A673 (cell line): ENCODE measurements at regions of chr1 and their contacts with region 1.

Region 1: DNA sequence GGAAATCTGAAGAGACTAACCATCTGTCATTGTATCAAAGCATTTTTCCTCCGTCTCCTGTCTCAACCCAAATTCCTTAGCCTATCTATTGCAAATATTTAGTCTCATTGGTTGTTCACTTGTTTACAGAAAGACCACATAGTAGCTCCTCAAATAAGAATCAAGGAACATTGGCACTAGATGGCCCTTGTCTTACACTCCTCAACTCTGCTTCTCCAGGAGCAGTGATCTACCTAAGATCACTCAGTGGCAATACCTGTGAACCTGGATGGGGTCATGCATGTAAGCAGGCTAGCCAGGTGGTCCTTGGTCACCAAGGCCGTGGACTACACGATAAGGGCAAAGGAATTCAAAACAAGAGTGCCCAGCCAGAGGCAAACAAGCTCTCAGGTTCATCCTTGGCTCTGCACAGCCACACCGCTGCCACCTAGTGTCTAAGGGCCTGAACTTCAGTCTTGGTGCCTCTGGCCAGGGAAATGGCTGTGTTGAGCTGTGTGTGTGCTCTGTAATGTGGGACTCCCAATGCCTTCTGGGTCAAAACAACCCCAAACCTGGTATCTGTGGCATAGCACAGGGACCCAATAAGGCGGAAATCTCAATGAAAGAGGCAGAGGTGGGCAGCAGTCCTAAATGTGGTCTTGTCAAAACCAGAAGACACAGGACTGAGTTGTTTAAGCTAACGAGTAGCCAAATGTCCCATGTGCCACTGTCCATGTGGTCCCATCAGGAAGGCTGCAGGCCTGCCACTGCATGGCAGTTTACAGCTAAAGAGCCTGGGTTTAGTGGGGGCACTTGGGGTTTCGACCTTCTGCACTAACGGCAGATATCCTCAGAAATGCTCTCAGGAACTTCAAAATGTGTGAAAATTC is 54.5 kb downstream of the GPR161 start:
- DNase-seq: peak; percentile 79
- H3K4me3 ChIP-seq: no peak overlapping the region
- H3K27ac ChIP-seq: no peak overlapping the region
- H3K4me1 ChIP-seq: no peaks in the 10 kb centered on the region
- H3K27me3 ChIP-seq: no peaks in the 10 kb centered on the region
- CTCF ChIP-seq: peak; percentile 93

Region 2: GRCh38 chr1:167721617-167722151 is 360.6 kb before region 1 on chr1 and contains the start of gene MPZL1:
- CTCF ChIA-PET with region 1: interaction called, 12 read pairs
- POLR2A ChIA-PET with region 1: no interaction called
- intact Hi-C with region 1: loop called (anchors 2 kb)
- DNase-seq: peak; percentile 95
- H3K4me3 ChIP-seq: peak within 1 kb of the TSS; percentile 97
- H3K27ac ChIP-seq: peak within 1 kb of the TSS; percentile 80
- H3K4me1 ChIP-seq: peaks cover 13% of the 10 kb centered on the region
- H3K27me3 ChIP-seq: no peaks in the 10 kb centered on the region
- CTCF ChIP-seq: no peak
- total RNA-seq, gene MPZL1: 87.8 and 90.4 TPM in 2 replicates

Region 3: GRCh38 chr1:167803358-167804207 is 278.7 kb before region 1 on chr1:
- CTCF ChIA-PET with region 1: interaction called, 12 read pairs
- POLR2A ChIA-PET with region 1: no interaction called
- intact Hi-C with region 1: loop called (anchors 10 kb)
- DNase-seq: peak; percentile 96
- H3K4me3 ChIP-seq: no peak overlapping the region
- H3K27ac ChIP-seq: no peak overlapping the region
- H3K4me1 ChIP-seq: no peaks in the 10 kb centered on the region
- H3K27me3 ChIP-seq: no peaks in the 10 kb centered on the region
- CTCF ChIP-seq: peak; percentile 99

Region 4: DNA sequence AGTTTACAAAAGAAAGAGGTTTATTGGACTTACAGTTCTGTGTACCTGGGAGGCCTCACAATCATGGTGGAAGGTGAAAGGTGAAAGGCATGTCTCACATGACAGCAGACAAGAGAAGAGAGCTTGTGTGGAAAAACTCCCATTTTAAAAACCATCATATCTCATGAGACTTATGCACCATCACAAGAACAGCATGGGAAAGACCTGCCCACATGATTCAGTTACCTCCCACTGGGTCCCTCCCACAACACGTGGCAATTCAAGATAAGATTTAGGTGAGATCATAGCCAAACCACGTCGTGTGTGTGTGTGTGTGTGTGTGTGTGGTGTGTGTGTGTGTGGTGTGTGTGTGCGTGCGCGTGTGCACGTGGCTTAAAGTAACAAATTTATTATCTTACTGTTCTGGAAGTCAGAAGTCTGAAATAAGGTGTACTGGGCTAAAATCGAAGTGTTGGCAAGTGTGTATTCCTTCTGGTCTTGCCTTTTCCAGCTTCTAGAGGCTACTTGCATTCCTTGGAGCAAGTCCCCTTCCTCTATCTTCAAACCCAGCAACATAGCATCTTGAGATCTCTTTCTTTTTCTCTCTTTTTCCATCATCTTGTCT is 97.3 kb before region 1 on chr1:
- CTCF ChIA-PET with region 1: no interaction called
- POLR2A ChIA-PET with region 1: no interaction called
- intact Hi-C with region 1: no loop called
- DNase-seq: no peak
- H3K4me3 ChIP-seq: no peak overlapping the region
- H3K27ac ChIP-seq: no peak overlapping the region
- H3K4me1 ChIP-seq: no peaks in the 10 kb centered on the region
- H3K27me3 ChIP-seq: no peaks in the 10 kb centered on the region
- CTCF ChIP-seq: no peak

Region 5: DNA sequence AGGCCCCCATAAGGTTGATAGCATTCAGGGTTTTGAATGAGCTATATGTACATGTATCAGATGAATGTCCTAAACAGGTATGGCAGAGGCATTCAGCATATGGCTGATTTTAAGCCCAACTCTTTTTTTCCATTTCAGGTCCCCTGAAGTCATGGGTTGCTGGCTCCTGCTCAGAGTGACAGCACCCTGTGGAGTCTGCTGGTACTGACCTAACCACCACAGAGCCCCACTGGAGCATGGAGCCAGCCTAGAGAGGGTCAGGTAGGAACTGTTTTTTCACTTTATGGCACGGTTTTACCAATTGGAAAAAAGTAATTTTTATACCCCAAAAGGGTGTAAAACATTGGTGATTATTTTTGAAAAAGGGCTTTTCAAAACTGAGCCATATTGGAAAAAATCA is 62.8 kb before region 1 on chr1:
- CTCF ChIA-PET with region 1: no interaction called
- POLR2A ChIA-PET with region 1: no interaction called
- intact Hi-C with region 1: no loop called
- DNase-seq: no peak
- H3K4me3 ChIP-seq: no peak overlapping the region
- H3K27ac ChIP-seq: no peak overlapping the region
- H3K4me1 ChIP-seq: no peaks in the 10 kb centered on the region
- H3K27me3 ChIP-seq: no peaks in the 10 kb centered on the region
- CTCF ChIP-seq: no peak

Region 6: DNA sequence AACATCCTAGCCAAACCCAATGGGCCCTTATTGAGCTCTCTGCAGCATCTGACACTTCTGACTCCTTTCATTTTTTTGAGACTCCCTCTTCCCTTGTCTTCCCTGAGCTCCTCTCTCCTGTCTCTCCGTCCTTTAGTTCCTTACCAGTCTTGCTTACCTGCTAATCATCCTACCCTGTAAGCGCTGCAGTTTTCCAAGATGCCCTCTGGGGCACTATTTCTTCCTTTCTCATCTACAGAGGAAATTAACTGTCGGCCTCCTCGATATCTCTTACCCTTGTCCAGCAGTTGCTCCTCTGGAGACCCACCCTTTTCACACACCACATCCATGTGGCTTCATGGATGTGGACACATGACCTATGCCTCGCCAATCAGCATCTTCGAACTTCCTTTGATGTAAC is 47.7 kb after region 1 on chr1:
- CTCF ChIA-PET with region 1: no interaction called
- POLR2A ChIA-PET with region 1: no interaction called
- intact Hi-C with region 1: no loop called
- DNase-seq: no peak
- H3K4me3 ChIP-seq: no peak overlapping the region
- H3K27ac ChIP-seq: no peak overlapping the region
- H3K4me1 ChIP-seq: peaks cover 15% of the 10 kb centered on the region
- H3K27me3 ChIP-seq: no peaks in the 10 kb centered on the region
- CTCF ChIP-seq: no peak